ENCODE measurements at regions of chr7 and their contacts with region 1.

Region 1: GRCh38 chr7:18521945-18522566 is 26.5 kb downstream of the HDAC9 start:
- DNase-seq: no peak
- H3K4me3 ChIP-seq: no peak overlapping the region
- H3K27ac ChIP-seq: no peak overlapping the region
- H3K4me1 ChIP-seq: no peaks in the 10 kb centered on the region
- H3K27me3 ChIP-seq: no peaks in the 10 kb centered on the region
- CTCF ChIP-seq: no peak

Region 2: GRCh38 chr7:18648849-18649758 is 127.0 kb after region 1 on chr7:
- CTCF ChIA-PET with region 1: no interaction called
- POLR2A ChIA-PET with region 1: no interaction called
- intact Hi-C with region 1: no loop called
- DNase-seq: peak in 1 of 2 experiments; percentile 77
- H3K4me3 ChIP-seq: no peak overlapping the region
- H3K27ac ChIP-seq: no peak overlapping the region
- H3K4me1 ChIP-seq: peaks cover 18% of the 10 kb centered on the region
- H3K27me3 ChIP-seq: no peaks in the 10 kb centered on the region
- CTCF ChIP-seq: no peak

Region 3: DNA sequence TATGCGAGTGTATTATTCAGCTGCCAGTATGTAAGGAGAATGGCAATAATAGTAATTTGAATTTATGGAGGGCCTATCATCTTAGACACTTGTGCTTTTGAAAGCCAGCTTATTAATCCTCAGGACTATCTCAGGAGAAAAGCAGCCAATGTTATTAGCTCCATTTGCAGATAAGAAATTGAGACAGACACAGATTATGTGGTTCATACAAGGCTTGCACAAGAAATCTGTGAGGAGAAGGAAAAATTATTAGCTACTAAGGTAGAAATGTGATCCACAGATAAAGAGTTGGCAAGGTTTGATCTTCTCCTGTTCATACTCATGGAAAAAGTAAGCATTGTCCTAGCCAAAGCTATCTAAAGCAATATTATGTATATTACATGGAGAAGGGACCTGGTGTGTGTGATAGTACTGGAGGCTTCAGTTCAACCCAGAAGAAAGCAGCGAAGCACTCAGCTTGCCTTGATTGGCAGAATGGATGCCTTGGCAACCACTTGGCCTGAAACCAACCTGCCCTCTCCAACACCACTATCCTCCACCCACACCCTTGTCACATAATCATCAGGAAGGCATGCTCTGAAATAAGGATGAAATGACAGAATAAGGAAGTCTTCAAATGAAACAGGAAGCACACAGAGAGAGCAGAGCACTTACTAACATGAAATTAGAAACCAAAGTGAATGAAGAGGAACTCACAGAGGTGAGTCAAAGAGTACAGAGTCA is 1677.1 kb after region 1 on chr7:
- CTCF ChIA-PET with region 1: no interaction called
- POLR2A ChIA-PET with region 1: interaction called, 12 read pairs
- intact Hi-C with region 1: no loop called
- DNase-seq: peak; percentile 89 to 91
- H3K4me3 ChIP-seq: no peak overlapping the region
- H3K27ac ChIP-seq: peak overlapping the region; percentile 65
- H3K4me1 ChIP-seq: peaks cover 24% of the 10 kb centered on the region
- H3K27me3 ChIP-seq: no peaks in the 10 kb centered on the region
- CTCF ChIP-seq: no peak